Dorsolateral prefrontal cortex (tissue), 120 donors: ENCODE measurements at regions of chr1 and their contacts with region 1.

Region 1: DNA sequence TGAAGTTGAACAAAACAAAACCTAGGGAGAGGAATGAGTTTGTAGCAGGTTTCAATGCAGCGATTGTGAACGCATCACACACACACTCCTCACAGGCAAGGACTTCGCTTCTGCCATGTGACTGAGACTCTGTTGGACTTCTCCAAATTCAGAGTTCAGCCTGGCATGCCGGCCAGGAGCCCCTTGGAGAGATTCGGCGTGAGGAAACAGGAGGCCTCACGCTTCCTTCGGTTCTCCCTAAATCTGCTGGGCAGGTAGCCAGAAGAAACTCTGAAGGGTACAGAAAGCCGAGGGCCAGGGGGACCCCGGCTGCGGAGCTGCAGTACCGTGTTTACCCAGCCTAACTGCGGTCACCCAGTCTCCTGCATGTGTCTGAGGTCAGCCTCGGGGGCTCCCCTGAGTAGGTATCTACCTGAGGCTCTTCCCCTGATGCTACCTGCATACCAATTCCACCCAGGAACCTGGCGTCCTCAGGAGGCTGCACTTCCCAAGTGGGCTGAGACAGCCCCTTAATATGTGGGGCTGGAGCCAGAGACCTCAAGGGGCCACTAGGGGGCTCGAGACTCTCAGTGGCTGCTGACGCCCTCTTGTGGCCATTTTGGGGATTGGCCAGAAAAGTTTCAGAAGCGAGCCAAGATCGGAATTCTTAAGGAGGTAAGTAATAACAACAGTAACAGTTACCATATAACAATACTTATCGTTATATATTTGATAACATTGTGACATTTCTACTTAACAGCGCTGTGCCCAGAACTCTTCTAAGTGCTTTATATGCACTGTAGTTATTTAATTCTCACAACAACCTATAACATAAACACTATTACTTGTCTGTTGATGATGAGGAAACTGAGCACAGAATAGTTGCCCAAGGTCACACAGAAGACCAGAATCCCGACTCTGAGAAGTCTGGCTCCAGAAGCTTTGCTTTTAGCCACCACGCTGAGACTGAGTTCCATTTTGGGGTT is 2.7 kb upstream of the ANXA9 start:
- DNase-seq: peak; percentile 68 to 93 (median 80)
- H3K4me3 ChIP-seq: peak overlapping the region in 56 of 59 donors; percentile 0 to 64 (median 42)
- H3K27ac ChIP-seq: peak overlapping the region in 58 of 59 donors; percentile 2 to 99 (median 76)
- H3K27me3 ChIP-seq: no peaks in the 10 kb centered on the region
- CTCF ChIP-seq: peak; percentile 94 to 100 (median 100)

Region 2: GRCh38 chr1:150456146-150456647 is 523.2 kb before region 1 on chr1:
- intact Hi-C with region 1: loop called in 1 of 2 experiments (anchors 10 kb)
- DNase-seq: no peak
- H3K4me3 ChIP-seq: no peak overlapping the region
- H3K27ac ChIP-seq: no peak overlapping the region
- H3K27me3 ChIP-seq: no peaks in the 10 kb centered on the region
- CTCF ChIP-seq: no peak

Region 3: GRCh38 chr1:150846473-150847146 is 132.8 kb before region 1 on chr1:
- intact Hi-C with region 1: no loop called
- DNase-seq: no peak
- H3K4me3 ChIP-seq: no peak overlapping the region
- H3K27ac ChIP-seq: no peak overlapping the region
- H3K27me3 ChIP-seq: no peaks in the 10 kb centered on the region
- CTCF ChIP-seq: no peak

Region 4: DNA sequence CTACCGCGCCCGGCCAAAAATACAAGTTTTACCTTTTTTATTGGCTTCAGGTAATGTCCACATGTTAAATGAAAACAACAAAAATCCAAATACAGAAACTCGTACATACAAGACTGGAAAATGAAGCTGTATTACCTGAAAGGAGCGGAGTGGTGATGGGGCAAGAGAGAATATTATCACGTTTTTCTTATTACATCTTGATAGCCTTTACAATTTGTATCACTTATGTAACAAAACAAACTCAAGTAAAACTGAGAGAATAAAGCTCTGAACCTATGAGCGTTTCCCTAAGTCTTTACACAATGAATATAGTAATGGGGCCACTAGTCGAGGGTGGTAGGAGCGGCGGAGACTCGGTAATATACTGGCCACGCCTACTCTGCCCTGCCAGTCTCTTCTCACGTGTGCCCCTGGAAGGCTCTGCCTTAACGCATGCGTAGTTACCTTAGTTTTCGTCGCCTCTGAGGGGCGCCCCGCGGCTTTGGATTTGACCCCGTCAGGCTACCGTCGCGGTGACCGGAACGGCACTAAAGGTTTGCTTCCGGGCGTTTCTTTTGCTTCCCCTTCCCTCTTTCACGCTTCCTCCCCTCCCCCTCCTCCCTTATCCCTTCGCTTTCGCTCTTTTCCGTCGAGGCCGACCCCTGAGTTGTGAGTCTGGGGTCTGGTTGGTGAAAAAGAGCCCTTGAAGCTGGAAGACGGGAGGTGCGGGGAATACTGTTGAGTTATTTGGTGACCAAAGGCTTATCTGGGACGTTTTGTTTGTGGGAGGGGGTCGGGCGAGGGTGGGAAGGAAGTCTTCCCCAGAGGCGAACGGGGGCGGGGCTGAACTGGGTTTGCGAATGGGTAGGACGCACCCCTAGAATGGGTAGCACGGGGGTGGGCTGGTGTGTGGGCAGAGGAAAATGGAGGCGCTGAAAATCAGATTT is 53.3 kb before region 1 on chr1 and contains the start of gene SETDB1:
- intact Hi-C with region 1: loop called (anchors 5 kb)
- DNase-seq: peak; percentile 85 to 93 (median 90)
- H3K4me3 ChIP-seq: peak within 1 kb of the TSS; percentile 47 to 94 (median 75)
- H3K27ac ChIP-seq: peak within 1 kb of the TSS in 58 of 59 donors; percentile 3 to 92 (median 80)
- H3K27me3 ChIP-seq: no peaks in the 10 kb centered on the region
- CTCF ChIP-seq: peak in 52 of 56 donors; percentile 20 to 71 (median 47)
- total RNA-seq, gene SETDB1: 29.7 to 62.6 (median 42.4) TPM

Region 5: GRCh38 chr1:151024540-151025146 is 45.3 kb after region 1 on chr1:
- intact Hi-C with region 1: no loop called
- DNase-seq: peak; percentile 63 to 86 (median 78)
- H3K4me3 ChIP-seq: no peak overlapping the region
- H3K27ac ChIP-seq: peak overlapping the region in 42 of 59 donors; percentile 5 to 83 (median 48)
- H3K27me3 ChIP-seq: no peaks in the 10 kb centered on the region
- CTCF ChIP-seq: peak; percentile 40 to 88 (median 75)

Region 6: GRCh38 chr1:151047925-151048645 is 68.7 kb after region 1 on chr1:
- intact Hi-C with region 1: no loop called
- DNase-seq: peak; percentile 53 to 84 (median 72)
- H3K4me3 ChIP-seq: peak overlapping the region; percentile 66 to 99 (median 88)
- H3K27ac ChIP-seq: peak overlapping the region; percentile 83 to 99 (median 94)
- H3K27me3 ChIP-seq: no peaks in the 10 kb centered on the region
- CTCF ChIP-seq: peak in 37 of 56 donors; percentile 19 to 62 (median 52)

Region 7: DNA sequence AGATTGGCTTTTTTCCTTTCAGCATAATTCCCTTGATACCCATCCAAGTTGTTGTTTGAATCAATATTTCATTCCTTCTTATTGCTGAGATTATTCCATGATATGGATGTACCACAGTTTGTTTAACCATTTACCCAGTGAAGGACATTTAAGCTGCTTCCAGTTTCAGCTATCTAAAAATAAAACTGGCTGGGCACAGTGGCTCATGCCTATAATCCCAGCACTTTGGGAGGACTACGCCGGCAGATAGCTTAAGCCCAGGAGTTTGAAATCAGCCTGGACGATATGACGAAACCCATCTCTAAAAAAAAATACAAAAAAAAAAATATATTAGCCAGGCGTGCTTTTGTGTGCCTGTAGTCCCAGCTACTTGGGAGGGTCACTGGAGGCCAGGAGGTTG is 134.5 kb after region 1 on chr1:
- intact Hi-C with region 1: no loop called
- DNase-seq: no peak
- H3K4me3 ChIP-seq: no peak overlapping the region
- H3K27ac ChIP-seq: no peak overlapping the region
- H3K27me3 ChIP-seq: no peaks in the 10 kb centered on the region
- CTCF ChIP-seq: no peak